ENCODE measurements at regions of chr3 and their contacts with region 1.

Region 1: DNA sequence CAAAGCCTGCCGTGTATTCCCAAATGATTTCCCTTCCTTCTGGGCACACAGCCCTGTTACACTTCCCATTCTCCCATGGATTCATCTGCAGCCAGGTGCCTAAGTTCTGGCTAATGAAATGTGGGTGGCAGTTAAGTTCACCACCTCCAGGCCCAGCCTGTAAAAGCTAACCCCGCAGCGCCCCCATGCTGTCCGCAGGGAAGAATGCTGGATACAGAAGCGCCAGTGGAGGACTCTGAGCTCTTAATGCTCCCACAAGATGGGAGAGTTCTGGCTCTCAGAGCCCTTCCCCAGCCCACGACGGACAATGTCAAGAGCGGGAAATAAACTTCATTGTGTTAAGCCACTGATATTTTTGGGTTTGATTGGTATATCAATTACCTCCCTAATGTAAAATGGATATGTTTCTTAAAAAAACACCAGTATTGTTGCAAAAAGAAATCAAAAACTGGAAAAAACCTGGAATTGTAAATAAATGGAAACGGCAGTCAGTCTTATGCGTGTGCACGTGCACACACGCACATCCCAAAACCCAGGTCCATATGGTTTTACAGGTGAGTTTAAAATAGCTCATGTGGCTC is 37.7 kb upstream of the FGD5 start:
- DNase-seq: peak; percentile 70 to 85
- H3K4me3 ChIP-seq: no peak overlapping the region
- H3K27ac ChIP-seq: no peak overlapping the region
- H3K4me1 ChIP-seq: peaks cover 2 to 9% (median 6%) of the 10 kb centered on the region in 4 experiments; a peak in 4 of 7 replicates
- H3K27me3 ChIP-seq: no peaks in the 10 kb centered on the region
- CTCF ChIP-seq: peak; percentile 84 to 97 (median 94)
- EP300 ChIP-seq: no peak
- POLR2A ChIP-seq: no peak
- RAD21 ChIP-seq: peak; percentile 93 to 95

Region 2: DNA sequence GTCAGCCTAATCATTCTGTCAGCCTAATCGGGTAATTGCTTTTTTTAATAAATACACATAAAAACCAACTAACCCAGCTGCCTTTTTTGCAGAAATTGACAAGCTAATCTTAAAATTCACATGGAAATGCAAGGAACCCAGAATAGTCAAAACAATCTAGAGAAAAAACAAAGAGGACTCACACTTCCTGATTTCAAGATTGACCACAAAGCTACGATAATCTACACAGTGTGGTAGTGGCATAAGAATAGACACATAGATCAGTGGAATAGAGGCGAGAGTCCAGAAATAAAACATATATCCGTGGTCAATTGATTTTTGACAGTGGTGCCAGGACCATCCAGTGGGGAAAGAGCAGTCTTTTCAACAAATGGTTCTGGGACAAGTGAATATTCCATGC is 108.4 kb before region 1 on chr3:
- CTCF ChIA-PET with region 1: interaction called, 129 read pairs
- POLR2A ChIA-PET with region 1: interaction called, 3 read pairs
- DNase-seq: no peak
- H3K4me3 ChIP-seq: no peak overlapping the region
- H3K27ac ChIP-seq: no peak overlapping the region
- H3K4me1 ChIP-seq: no peaks in the 10 kb centered on the region
- H3K27me3 ChIP-seq: no peaks in the 10 kb centered on the region
- CTCF ChIP-seq: no peak
- EP300 ChIP-seq: no peak
- POLR2A ChIP-seq: no peak
- RAD21 ChIP-seq: no peak

Region 3: GRCh38 chr3:14719006-14719405 is 62.0 kb before region 1 on chr3:
- CTCF ChIA-PET with region 1: interaction called, 12 read pairs
- POLR2A ChIA-PET with region 1: no interaction called
- DNase-seq: no peak
- H3K4me3 ChIP-seq: no peak overlapping the region
- H3K27ac ChIP-seq: no peak overlapping the region
- H3K4me1 ChIP-seq: no peaks in the 10 kb centered on the region
- H3K27me3 ChIP-seq: no peaks in the 10 kb centered on the region
- CTCF ChIP-seq: no peak
- EP300 ChIP-seq: no peak
- POLR2A ChIP-seq: no peak
- RAD21 ChIP-seq: no peak

Region 4: DNA sequence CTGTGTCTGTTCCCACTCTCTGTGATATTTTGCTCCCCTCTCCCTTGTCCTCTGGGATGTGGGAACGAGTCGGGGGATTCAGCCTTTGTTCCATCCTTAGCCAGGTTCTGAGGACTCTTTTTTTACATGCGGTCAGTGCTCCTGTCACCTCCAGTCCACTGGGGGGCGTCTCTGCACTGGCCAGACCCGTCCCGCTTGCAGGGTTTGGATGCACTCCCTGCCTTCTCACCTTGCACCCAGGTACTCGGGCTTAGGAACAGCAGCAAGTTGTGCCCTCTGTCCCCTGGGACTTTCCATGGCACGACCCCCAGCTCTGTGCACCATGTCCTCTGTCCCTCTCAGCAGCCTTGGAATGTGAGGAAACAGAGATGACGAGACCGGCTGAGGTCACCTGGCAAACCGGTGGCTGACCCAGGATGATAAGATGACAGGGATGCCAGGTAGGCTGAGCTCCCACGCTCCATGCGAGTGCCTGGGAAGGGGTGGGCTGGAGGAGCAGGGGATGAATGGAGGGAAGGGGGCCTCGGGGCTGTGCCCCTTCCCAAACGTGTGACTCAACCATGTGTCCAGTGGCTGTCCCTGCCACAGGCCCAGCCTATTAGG is 10.4 kb after region 1 on chr3:
- CTCF ChIA-PET with region 1: interaction called, 84 read pairs
- POLR2A ChIA-PET with region 1: no interaction called
- DNase-seq: peak; percentile 57 to 89
- H3K4me3 ChIP-seq: peak overlapping the region in 1 of 4 experiments; percentile 42; a peak in 1 of 8 replicates
- H3K27ac ChIP-seq: no peak overlapping the region
- H3K4me1 ChIP-seq: peaks cover 0 to 4% (median 2%) of the 10 kb centered on the region in 4 experiments; a peak in 4 of 7 replicates
- H3K27me3 ChIP-seq: peaks cover 0 to 3% (median 0%) of the 10 kb centered on the region in 4 experiments; a peak in 1 of 7 replicates
- CTCF ChIP-seq: peak; percentile 91 to 97 (median 96)
- EP300 ChIP-seq: no peak
- POLR2A ChIP-seq: no peak
- RAD21 ChIP-seq: peak; percentile 97 to 98

Region 5: GRCh38 chr3:14876921-14877360 is 95.9 kb after region 1 on chr3:
- CTCF ChIA-PET with region 1: interaction called, 10 read pairs
- POLR2A ChIA-PET with region 1: no interaction called
- DNase-seq: no peak
- H3K4me3 ChIP-seq: no peak overlapping the region
- H3K27ac ChIP-seq: no peak overlapping the region
- H3K4me1 ChIP-seq: peaks cover 0 to 21% (median 12%) of the 10 kb centered on the region in 4 experiments; a peak in 6 of 7 replicates
- H3K27me3 ChIP-seq: no peaks in the 10 kb centered on the region
- CTCF ChIP-seq: no peak
- EP300 ChIP-seq: no peak
- POLR2A ChIP-seq: no peak
- RAD21 ChIP-seq: no peak

Region 6: DNA sequence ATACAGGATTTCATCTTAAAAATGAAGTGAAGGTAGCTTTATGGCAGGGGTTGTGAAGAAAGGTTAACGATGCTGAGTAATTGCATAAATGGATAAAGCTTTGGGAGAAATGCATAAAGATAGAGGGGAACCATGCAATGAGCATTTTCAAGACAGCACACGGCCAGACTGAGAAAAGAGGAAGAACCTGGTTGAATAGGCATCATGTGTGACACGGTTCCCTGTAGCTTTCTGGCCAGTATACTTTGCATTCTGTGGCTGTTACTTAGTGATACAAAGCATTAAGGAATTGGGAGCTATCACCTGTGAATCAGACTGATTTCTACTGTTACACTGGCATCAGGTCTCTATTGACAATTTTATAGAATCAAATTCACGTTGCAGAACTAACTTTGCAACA is 199.7 kb after region 1 on chr3:
- CTCF ChIA-PET with region 1: no interaction called
- POLR2A ChIA-PET with region 1: no interaction called
- DNase-seq: no peak
- H3K4me3 ChIP-seq: no peak overlapping the region
- H3K27ac ChIP-seq: no peak overlapping the region
- H3K4me1 ChIP-seq: no peaks in the 10 kb centered on the region
- H3K27me3 ChIP-seq: no peaks in the 10 kb centered on the region
- CTCF ChIP-seq: no peak
- EP300 ChIP-seq: no peak
- POLR2A ChIP-seq: no peak
- RAD21 ChIP-seq: no peak

Region 7: GRCh38 chr3:14991818-14992612 is 211.0 kb after region 1 on chr3:
- CTCF ChIA-PET with region 1: no interaction called
- POLR2A ChIA-PET with region 1: no interaction called
- DNase-seq: no peak
- H3K4me3 ChIP-seq: no peak overlapping the region
- H3K27ac ChIP-seq: no peak overlapping the region
- H3K4me1 ChIP-seq: peaks cover 0 to 9% (median 5%) of the 10 kb centered on the region in 4 experiments; a peak in 5 of 7 replicates
- H3K27me3 ChIP-seq: peaks cover 0 to 8% (median 0%) of the 10 kb centered on the region in 4 experiments; a peak in 1 of 7 replicates
- CTCF ChIP-seq: no peak
- EP300 ChIP-seq: no peak
- POLR2A ChIP-seq: no peak
- RAD21 ChIP-seq: no peak

Measured in H1 (cell line).